ENCODE measurements at regions of chr14 and their contacts with region 1.

Region 1: GRCh38 chr14:31926123-31926522 is 151.0 kb upstream of the ARHGAP5 start:
- DNase-seq: peak; percentile 64
- ATAC-seq: peak; percentile 53
- H3K4me3 ChIP-seq: no peak overlapping the region
- H3K4me3 Mint-ChIP-seq: no peak overlapping the region
- H3K27ac ChIP-seq: no peak overlapping the region
- H3K27ac Mint-ChIP-seq: no peak overlapping the region
- H3K4me1 ChIP-seq: no peaks in the 10 kb centered on the region
- H3K4me1 Mint-ChIP-seq: no peaks in the 10 kb centered on the region
- H3K27me3 ChIP-seq: no peaks in the 10 kb centered on the region
- H3K27me3 Mint-ChIP-seq: no peaks in the 10 kb centered on the region
- CTCF ChIP-seq: peak; percentile 74

Region 2: GRCh38 chr14:31937721-31938346 is 11.7 kb after region 1 on chr14:
- CTCF ChIA-PET with region 1: interaction called, 13 read pairs
- POLR2A ChIA-PET with region 1: no interaction called
- intact Hi-C with region 1: no loop called
- DNase-seq: peak; percentile 11
- ATAC-seq: peak; percentile 83
- H3K4me3 ChIP-seq: no peak overlapping the region
- H3K4me3 Mint-ChIP-seq: no peak overlapping the region
- H3K27ac ChIP-seq: no peak overlapping the region
- H3K27ac Mint-ChIP-seq: peak overlapping the region; percentile 47
- H3K4me1 ChIP-seq: peaks cover 0 to 3% of the 10 kb centered on the region in 2 donors
- H3K4me1 Mint-ChIP-seq: peaks cover 4% of the 10 kb centered on the region
- H3K27me3 ChIP-seq: no peaks in the 10 kb centered on the region
- H3K27me3 Mint-ChIP-seq: no peaks in the 10 kb centered on the region
- CTCF ChIP-seq: no peak

Region 3: GRCh38 chr14:32134448-32135070 is 208.4 kb after region 1 on chr14:
- CTCF ChIA-PET with region 1: no interaction called
- POLR2A ChIA-PET with region 1: no interaction called
- intact Hi-C with region 1: no loop called
- DNase-seq: no peak
- ATAC-seq: no peak
- H3K4me3 ChIP-seq: no peak overlapping the region
- H3K4me3 Mint-ChIP-seq: no peak overlapping the region
- H3K27ac ChIP-seq: no peak overlapping the region
- H3K27ac Mint-ChIP-seq: no peak overlapping the region
- H3K4me1 ChIP-seq: no peaks in the 10 kb centered on the region
- H3K4me1 Mint-ChIP-seq: peaks cover 4% of the 10 kb centered on the region
- H3K27me3 ChIP-seq: no peaks in the 10 kb centered on the region
- H3K27me3 Mint-ChIP-seq: no peaks in the 10 kb centered on the region
- CTCF ChIP-seq: no peak

Region 4: GRCh38 chr14:32244404-32244803 is 318.3 kb after region 1 on chr14:
- CTCF ChIA-PET with region 1: interaction called, 219 read pairs
- POLR2A ChIA-PET with region 1: no interaction called
- intact Hi-C with region 1: no loop called
- DNase-seq: no peak
- ATAC-seq: no peak
- H3K4me3 ChIP-seq: no peak overlapping the region
- H3K4me3 Mint-ChIP-seq: no peak overlapping the region
- H3K27ac ChIP-seq: no peak overlapping the region
- H3K27ac Mint-ChIP-seq: no peak overlapping the region
- H3K4me1 ChIP-seq: no peaks in the 10 kb centered on the region
- H3K4me1 Mint-ChIP-seq: no peaks in the 10 kb centered on the region
- H3K27me3 ChIP-seq: no peaks in the 10 kb centered on the region
- H3K27me3 Mint-ChIP-seq: peaks cover 12% of the 10 kb centered on the region
- CTCF ChIP-seq: no peak

Region 5: GRCh38 chr14:32259368-32260013 is 333.4 kb after region 1 on chr14:
- CTCF ChIA-PET with region 1: interaction called, 219 read pairs
- POLR2A ChIA-PET with region 1: no interaction called
- intact Hi-C with region 1: no loop called
- DNase-seq: no peak
- ATAC-seq: no peak
- H3K4me3 ChIP-seq: no peak overlapping the region
- H3K4me3 Mint-ChIP-seq: no peak overlapping the region
- H3K27ac ChIP-seq: no peak overlapping the region
- H3K27ac Mint-ChIP-seq: no peak overlapping the region
- H3K4me1 ChIP-seq: no peaks in the 10 kb centered on the region
- H3K4me1 Mint-ChIP-seq: no peaks in the 10 kb centered on the region
- H3K27me3 ChIP-seq: no peaks in the 10 kb centered on the region
- H3K27me3 Mint-ChIP-seq: no peaks in the 10 kb centered on the region
- CTCF ChIP-seq: no peak

Measured in B cell (primary cell).